ENCODE measurements at regions of chr16 and their contacts with region 1.

Region 1: DNA sequence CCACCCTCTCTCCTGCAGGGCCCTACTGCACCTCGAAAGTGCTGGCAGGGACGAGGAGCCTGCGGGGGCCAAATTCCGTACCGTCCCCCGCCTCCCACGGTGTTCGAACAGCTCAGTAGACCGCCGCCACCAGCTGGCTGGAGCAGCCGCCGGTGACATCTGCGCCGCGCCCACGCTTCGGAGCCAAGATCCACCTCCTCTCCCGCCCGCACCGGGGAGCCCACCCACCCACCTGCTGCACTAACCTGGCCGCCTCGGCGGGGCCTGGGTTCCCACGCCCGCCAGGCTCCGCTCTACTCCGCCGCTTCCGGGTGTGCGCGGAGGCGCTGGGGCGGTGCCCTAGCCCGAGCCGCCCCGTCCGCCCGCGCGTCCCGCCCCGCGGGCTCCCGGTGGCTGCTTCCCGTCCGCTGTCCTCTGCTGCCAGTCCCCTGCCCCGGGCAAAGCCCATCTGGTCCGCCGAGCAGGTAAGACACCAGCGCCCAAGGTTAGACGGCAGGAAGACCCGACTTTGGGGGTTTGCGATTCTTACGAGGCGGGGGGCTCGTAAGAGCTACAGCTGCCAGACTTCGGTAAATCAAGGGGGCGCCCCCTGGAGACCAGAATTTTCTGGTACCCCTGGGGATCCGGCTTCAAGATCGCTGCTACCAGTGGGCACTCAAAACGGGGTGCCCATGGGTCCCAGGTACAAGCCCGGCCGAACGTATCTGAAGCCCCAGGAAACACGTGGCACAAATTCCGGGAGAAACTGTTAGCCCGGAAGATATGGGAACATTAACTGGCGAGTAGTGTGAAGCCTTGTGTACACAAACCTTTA is at the starts of genes FBXL8 and TRADD:
- DNase-seq: peak; percentile 86
- ATAC-seq: peak; percentile 73
- H3K4me3 Mint-ChIP-seq: peak within 1 kb of the TSS; percentile 96
- H3K27ac Mint-ChIP-seq: peak within 1 kb of the TSS; percentile 94
- H3K4me1 Mint-ChIP-seq: peaks cover 73% of the 10 kb centered on the region
- H3K27me3 Mint-ChIP-seq: peaks cover 15% of the 10 kb centered on the region
- total RNA-seq, gene FBXL8: 22.7 to 24.8 TPM
- total RNA-seq, gene TRADD: 39.2 to 40.7 TPM

Region 2: DNA sequence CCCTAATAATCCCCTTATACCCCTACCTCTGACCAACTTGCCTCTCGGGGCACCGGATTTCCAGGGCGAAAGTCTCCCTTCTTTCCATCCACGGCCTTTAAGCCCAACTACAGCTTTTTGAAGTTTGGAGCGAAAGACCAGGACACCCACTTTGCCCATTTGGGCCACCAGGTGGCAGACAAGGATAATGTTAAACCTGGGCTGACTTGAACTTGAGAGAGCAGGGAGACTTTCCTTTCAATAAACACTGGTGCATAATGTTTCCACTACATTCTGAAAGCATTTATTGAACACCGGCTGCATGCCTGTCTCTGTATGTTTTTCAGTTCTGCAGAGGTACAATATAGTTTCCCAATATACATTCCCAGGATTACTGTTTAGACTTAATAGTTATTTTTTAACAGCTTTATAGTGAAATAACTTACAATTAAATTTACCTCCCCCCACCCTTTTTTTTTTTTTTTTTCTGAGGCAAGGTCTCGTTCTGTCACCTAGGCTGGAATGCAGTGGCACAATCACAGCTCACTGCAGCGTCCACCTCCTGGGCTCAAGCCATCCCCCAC is 205.6 kb before region 1 on chr16:
- CTCF ChIA-PET with region 1: interaction called, 18 read pairs
- POLR2A ChIA-PET with region 1: interaction called, 3 read pairs
- DNase-seq: peak; percentile 87
- ATAC-seq: peak; percentile 98
- H3K4me3 Mint-ChIP-seq: no peak overlapping the region
- H3K27ac Mint-ChIP-seq: no peak overlapping the region
- H3K4me1 Mint-ChIP-seq: peaks cover 22% of the 10 kb centered on the region
- H3K27me3 Mint-ChIP-seq: peaks cover 33% of the 10 kb centered on the region

Region 3: DNA sequence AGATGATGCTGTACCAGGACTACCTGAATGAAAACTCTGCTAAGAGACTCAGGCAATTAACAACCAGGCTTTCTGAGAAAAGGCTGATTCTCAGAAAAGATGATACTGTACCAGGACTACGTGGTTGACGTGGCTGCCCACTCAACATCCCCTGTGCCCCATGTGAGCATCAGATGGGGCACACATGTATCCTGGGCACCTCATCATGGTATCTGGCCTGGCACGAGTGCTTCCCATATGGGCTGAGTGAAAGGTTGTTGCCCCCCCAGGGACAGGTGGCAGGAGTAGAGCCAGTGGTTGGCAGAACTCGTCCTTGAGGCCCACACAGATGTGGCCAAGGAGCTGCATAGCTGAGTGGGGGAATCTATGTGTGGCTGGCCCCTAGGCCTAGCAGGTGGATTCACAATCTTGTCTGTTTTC is 174.9 kb before region 1 on chr16:
- CTCF ChIA-PET with region 1: interaction called, 95 read pairs
- POLR2A ChIA-PET with region 1: interaction called, 5 read pairs
- DNase-seq: peak; percentile 78
- ATAC-seq: peak; percentile 83
- H3K4me3 Mint-ChIP-seq: peak overlapping the region; percentile 0
- H3K27ac Mint-ChIP-seq: peak overlapping the region; percentile 92
- H3K4me1 Mint-ChIP-seq: peaks cover 67% of the 10 kb centered on the region
- H3K27me3 Mint-ChIP-seq: no peaks in the 10 kb centered on the region

Region 4: GRCh38 chr16:67104061-67104460 is 55.7 kb before region 1 on chr16:
- CTCF ChIA-PET with region 1: interaction called, 42 read pairs
- POLR2A ChIA-PET with region 1: interaction called, 3 read pairs
- DNase-seq: no peak
- ATAC-seq: no peak
- H3K4me3 Mint-ChIP-seq: no peak overlapping the region
- H3K27ac Mint-ChIP-seq: peak overlapping the region; percentile 35
- H3K4me1 Mint-ChIP-seq: peaks cover 2% of the 10 kb centered on the region
- H3K27me3 Mint-ChIP-seq: no peaks in the 10 kb centered on the region

Region 5: DNA sequence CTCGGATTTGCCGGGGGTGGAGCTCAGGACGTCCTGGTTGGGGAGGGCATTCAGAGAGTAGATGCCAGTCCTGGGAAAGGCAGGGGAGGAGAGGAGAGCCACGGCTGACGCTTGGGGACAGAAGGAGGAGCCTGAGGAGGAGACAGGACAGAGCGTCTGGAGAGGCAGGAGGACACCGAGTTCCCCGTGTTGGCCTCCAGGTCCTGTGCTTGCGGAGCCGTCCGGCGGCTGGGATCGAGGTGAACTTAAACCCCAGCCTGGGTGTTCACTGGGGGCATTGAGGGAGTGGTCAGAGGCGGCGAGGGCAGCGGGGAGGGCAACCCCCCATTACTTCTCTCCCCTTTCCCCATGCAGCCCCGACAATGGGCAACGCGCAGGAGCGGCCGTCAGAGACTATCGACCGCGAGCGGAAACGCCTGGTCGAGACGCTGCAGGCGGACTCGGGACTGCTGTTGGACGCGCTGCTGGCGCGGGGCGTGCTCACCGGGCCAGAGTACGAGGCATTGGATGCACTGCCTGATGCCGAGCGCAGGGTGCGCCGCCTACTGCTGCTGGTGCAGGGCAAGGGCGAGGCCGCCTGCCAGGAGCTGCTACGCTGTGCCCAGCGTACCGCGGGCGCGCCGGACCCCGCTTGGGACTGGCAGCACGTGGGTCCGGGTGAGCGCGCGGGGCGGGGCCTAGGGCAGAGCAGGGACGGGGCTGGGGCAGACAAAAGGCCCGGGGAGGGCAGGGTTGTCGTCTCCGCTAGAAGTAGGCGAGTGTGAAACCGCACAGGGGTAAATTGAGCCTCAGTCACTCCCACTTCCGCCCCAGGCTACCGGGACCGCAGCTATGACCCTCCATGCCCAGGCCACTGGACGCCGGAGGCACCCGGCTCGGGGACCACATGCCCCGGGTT is 14.3 kb after region 1 on chr16:
- CTCF ChIA-PET with region 1: interaction called, 47 read pairs
- POLR2A ChIA-PET with region 1: interaction called, 13 read pairs
- DNase-seq: peak; percentile 76
- ATAC-seq: peak; percentile 77
- H3K4me3 Mint-ChIP-seq: peak overlapping the region; percentile 74
- H3K27ac Mint-ChIP-seq: peak overlapping the region; percentile 47
- H3K4me1 Mint-ChIP-seq: peaks cover 67% of the 10 kb centered on the region
- H3K27me3 Mint-ChIP-seq: peaks cover 42% of the 10 kb centered on the region